ENCODE measurements at regions of chr21 and their contacts with region 1.

Region 1: GRCh38 chr21:31088315-31088714 is 50.0 kb upstream of the KRTAP19-8 start:
- H3K4me3 Mint-ChIP-seq: no peak overlapping the region
- H3K27ac Mint-ChIP-seq: no peak overlapping the region
- H3K4me1 Mint-ChIP-seq: peaks cover 10% of the 10 kb centered on the region
- H3K27me3 Mint-ChIP-seq: peaks cover 28% of the 10 kb centered on the region

Region 2: DNA sequence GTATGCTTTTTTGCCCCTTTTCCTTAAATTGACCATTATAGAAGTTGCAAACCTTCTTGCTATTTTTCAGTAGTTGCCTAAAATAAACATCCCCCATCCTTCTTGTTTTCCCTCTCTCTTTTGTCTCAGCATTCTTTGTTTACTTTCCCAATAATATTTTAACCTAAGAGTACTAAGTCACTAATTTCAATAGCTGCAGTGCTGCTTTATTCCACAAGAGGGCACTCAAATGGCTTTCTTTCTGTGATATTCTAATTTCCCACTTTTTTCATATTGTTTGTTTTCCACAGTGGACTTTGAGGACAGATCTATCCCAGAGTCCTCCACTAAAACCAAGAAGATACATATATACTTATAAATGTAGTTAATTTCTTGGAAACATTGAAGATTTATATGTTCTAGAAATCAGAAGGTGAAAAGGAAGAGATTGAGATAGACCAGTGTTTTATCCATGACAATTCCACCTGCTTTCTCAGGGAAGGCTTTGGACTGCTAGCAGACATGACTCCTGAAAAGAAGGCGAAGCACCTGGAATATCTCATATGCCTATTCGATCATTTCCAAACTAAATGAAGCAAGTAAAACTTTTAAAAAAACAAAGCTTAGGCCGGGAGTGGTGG is 1043.8 kb before region 1 on chr21:
- intact Hi-C with region 1: loop called (anchors 5 kb)
- H3K4me3 Mint-ChIP-seq: no peak overlapping the region
- H3K27ac Mint-ChIP-seq: no peak overlapping the region
- H3K4me1 Mint-ChIP-seq: no peaks in the 10 kb centered on the region
- H3K27me3 Mint-ChIP-seq: no peaks in the 10 kb centered on the region

Region 3: DNA sequence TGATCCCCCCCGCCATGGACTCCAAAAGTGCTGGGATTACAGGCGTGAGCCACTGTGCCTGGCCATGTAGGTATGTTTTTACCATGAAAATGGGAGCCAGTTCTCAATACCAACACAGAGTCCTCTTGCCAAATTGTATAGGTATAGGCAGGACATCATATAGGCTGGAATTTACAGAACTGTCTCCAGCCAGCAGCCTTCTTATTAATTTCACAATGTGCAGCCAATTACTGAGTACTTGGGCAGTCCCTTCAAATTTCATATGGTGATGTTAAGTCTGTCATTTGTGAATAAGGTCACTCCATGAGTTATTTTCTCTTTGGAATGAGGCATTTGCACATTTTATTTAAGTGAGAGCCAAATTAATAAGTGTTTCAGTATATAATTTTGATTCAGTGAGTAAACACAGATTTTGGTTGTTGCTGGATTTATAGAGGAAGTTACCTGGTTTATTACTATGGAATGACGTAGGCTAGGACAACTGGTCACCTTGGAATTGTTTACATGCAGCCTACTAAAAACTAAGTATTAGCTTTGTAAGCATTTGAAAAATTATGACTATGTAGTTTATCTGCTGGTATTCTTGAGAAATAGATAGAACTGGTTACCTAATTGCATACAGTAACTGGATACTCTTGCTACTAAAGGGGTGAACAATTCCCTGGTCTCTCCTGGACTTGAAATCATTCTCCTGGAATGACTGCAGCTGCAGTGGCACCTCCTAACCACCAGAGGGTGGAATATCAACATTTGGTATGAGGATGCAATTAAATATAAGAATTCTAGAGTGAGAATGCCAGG is 747.7 kb before region 1 on chr21:
- intact Hi-C with region 1: loop called (anchors 5 kb)
- H3K4me3 Mint-ChIP-seq: no peak overlapping the region
- H3K27ac Mint-ChIP-seq: no peak overlapping the region
- H3K4me1 Mint-ChIP-seq: no peaks in the 10 kb centered on the region
- H3K27me3 Mint-ChIP-seq: no peaks in the 10 kb centered on the region

Region 4: DNA sequence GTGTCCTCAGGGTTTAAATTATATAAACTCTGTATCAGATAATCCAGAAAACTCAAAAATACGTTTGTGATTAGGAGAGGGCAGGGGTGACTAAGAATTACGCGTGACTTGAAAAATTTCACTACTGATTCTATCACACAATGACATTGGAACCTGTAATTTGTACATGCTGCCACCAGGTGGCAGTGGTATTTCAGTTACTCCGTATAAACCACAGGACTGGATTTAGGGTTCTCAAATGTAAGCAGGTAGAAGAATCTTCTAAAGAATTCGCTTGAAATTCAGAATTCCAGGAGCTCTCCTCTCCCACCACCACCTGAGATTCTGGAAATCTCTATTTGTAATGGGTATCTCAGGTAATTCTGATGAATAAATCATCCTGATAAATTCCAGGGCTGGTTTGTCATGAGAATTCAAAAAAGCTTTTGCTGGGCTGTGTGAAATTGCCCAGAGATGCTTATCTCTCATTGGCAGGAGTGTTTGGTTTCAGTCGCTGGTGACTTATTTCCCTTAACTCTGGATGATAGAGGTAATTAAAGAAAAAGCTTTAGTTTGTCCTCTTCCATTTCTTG is 257.0 kb before region 1 on chr21:
- intact Hi-C with region 1: loop called (anchors 1 kb)
- H3K4me3 Mint-ChIP-seq: no peak overlapping the region
- H3K27ac Mint-ChIP-seq: no peak overlapping the region
- H3K4me1 Mint-ChIP-seq: no peaks in the 10 kb centered on the region
- H3K27me3 Mint-ChIP-seq: no peaks in the 10 kb centered on the region

Region 5: GRCh38 chr21:31172328-31172727 is 84.0 kb after region 1 on chr21:
- intact Hi-C with region 1: no loop called
- H3K4me3 Mint-ChIP-seq: no peak overlapping the region
- H3K27ac Mint-ChIP-seq: peak overlapping the region; percentile 35
- H3K4me1 Mint-ChIP-seq: peaks cover 61% of the 10 kb centered on the region
- H3K27me3 Mint-ChIP-seq: no peaks in the 10 kb centered on the region

Measured in dendritic cell treated with granulocyte-macrophage colony-stimulating factor and Interleukin-4, amounts not matched to agents 40 ng/mL and 50 ng/mL, for 4 days (primary cell).